Head of caudate nucleus (tissue), 42 donors: ENCODE measurements at regions of chr11 and their contacts with region 1.

Region 1: GRCh38 chr11:127136438-127136837 is 135.9 kb upstream of the KIRREL3 start:
- DNase-seq: no peak

Region 2: GRCh38 chr11:126929179-126930061 is 207.0 kb before region 1 on chr11:
- intact Hi-C with region 1: loop called (anchors 5 kb)
- DNase-seq: peak in 13 of 42 donors; percentile 22 to 71 (median 43)

Region 3: GRCh38 chr11:127345819-127346459 is 209.5 kb after region 1 on chr11:
- intact Hi-C with region 1: no loop called
- DNase-seq: peak; percentile 13 to 85 (median 62)